Activated CD4-positive, alpha-beta T cell treated with anti-CD3 and anti-CD28 coated beads for 36 hours (primary cell): ENCODE measurements at regions of chrX and their contacts with region 1.

Region 1: GRCh38 chrX:1391707-1392375 is at the start of gene SLC25A6:
- DNase-seq: peak; percentile 100
- ATAC-seq: peak; percentile 98
- H3K4me3 Mint-ChIP-seq: peak within 1 kb of the TSS; percentile 82
- H3K27ac Mint-ChIP-seq: peak within 1 kb of the TSS; percentile 92
- H3K4me1 Mint-ChIP-seq: peaks cover 58% of the 10 kb centered on the region
- H3K27me3 Mint-ChIP-seq: no peaks in the 10 kb centered on the region
- total RNA-seq, gene SLC25A6: 396 to 456 TPM

Region 2: DNA sequence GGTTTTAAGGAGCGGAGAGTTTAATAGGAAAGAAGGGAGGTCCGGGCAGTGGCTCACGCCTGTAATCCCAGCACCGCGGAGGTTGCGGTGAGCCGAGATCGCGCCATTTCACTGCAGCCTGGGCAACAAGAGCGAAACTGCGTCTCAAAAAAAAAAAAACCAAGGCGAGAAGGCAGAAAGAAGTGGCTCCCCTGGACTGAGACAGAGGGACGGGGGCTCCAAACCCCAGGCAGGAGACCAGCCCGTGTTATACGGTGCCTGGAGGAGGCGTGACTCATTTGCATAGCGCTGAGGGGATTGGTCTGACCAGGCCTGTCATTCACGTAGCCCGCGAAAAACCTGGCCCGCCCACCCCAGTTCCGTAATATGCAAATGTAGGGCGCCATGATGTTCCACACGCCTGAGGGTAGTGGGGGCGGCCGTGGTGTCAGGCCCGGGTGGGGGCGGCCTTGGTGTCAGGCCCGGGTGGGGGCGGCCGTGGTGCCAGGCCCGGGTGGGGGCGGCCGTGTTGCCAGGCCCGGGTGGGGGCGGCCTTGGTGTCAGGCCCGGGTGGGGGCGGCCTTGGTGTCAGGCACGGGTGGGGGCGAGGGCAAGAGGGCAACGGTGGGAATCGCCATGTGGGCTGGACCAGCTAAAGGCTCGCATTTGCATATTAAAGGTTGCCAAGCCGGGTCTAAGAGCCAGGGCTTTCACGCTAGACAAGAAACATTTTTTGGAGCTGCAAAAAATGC is 1108.6 kb before region 1 on chrX:
- CTCF ChIA-PET with region 1: no interaction called
- POLR2A ChIA-PET with region 1: no interaction called
- intact Hi-C with region 1: loop called in 1 of 2 experiments (anchors 5 kb)
- DNase-seq: peak; percentile 96
- ATAC-seq: peak; percentile 96
- H3K4me3 Mint-ChIP-seq: peak overlapping the region; percentile 94
- H3K27ac Mint-ChIP-seq: peak overlapping the region; percentile 97
- H3K4me1 Mint-ChIP-seq: peaks cover 26% of the 10 kb centered on the region
- H3K27me3 Mint-ChIP-seq: no peaks in the 10 kb centered on the region

Region 3: GRCh38 chrX:386768-387575 is 1004.9 kb before region 1 on chrX and contains the start of gene PPP2R3B:
- CTCF ChIA-PET with region 1: no interaction called
- POLR2A ChIA-PET with region 1: no interaction called
- intact Hi-C with region 1: loop called in 1 of 2 experiments (anchors 1 kb)
- DNase-seq: peak; percentile 99
- ATAC-seq: peak; percentile 99
- H3K4me3 Mint-ChIP-seq: peak within 1 kb of the TSS; percentile 88
- H3K27ac Mint-ChIP-seq: peak within 1 kb of the TSS; percentile 96
- H3K4me1 Mint-ChIP-seq: peaks cover 8% of the 10 kb centered on the region
- H3K27me3 Mint-ChIP-seq: no peaks in the 10 kb centered on the region
- total RNA-seq, gene PPP2R3B: 23.3 to 26.8 TPM

Region 4: GRCh38 chrX:1246816-1247215 is 145.0 kb before region 1 on chrX:
- CTCF ChIA-PET with region 1: no interaction called
- POLR2A ChIA-PET with region 1: no interaction called
- intact Hi-C with region 1: loop called (anchors 1 to 5 kb)
- DNase-seq: peak; percentile 91
- ATAC-seq: peak; percentile 33
- H3K4me3 Mint-ChIP-seq: no peak overlapping the region
- H3K27ac Mint-ChIP-seq: no peak overlapping the region
- H3K4me1 Mint-ChIP-seq: peaks cover 36% of the 10 kb centered on the region
- H3K27me3 Mint-ChIP-seq: no peaks in the 10 kb centered on the region

Region 5: DNA sequence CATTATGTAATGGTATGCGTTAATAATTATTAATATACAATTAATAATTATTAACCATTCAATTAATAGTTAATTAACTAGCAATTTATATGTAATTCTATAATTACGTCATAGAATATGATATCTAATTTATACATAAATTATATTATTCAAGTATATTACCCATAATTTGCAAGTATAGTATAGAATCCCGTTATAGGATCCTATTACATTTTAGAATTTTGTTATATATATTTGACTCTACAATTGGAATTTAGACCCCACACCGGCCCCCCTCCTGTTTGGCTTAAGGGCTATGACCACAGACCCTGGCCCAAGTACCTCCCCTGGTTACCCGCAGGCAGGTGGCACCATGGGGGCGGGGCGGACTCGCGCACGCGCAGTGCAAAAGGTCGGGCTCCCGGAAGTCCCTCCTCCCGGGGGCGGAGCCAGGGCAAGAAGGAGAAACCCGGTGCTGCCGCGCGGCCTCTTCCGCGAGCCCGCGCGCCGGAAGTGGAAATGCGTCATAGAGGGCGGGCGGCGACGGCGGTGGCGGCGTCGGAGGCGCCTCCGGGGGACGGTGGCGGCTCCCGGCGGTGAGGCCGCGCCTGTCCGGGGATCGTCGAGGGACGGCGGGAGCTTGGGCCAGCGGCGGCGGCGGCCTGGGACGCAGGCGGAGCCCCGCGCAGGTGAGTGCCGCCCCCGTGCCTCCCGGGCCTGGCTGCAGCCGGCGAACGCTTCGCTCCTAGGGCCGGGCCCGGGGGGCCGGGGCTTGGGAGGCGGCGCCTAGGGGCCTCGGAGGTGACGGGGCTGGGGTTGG is 199.5 kb after region 1 on chrX and contains the start of gene AKAP17A:
- CTCF ChIA-PET with region 1: no interaction called
- POLR2A ChIA-PET with region 1: no interaction called
- intact Hi-C with region 1: loop called in 1 of 2 experiments (anchors 1 kb)
- DNase-seq: peak; percentile 99
- ATAC-seq: peak; percentile 91
- H3K4me3 Mint-ChIP-seq: peak within 1 kb of the TSS; percentile 91
- H3K27ac Mint-ChIP-seq: peak within 1 kb of the TSS; percentile 89
- H3K4me1 Mint-ChIP-seq: peaks cover 27% of the 10 kb centered on the region
- H3K27me3 Mint-ChIP-seq: no peaks in the 10 kb centered on the region
- total RNA-seq, gene AKAP17A: 49.7 to 51.2 TPM

Region 6: DNA sequence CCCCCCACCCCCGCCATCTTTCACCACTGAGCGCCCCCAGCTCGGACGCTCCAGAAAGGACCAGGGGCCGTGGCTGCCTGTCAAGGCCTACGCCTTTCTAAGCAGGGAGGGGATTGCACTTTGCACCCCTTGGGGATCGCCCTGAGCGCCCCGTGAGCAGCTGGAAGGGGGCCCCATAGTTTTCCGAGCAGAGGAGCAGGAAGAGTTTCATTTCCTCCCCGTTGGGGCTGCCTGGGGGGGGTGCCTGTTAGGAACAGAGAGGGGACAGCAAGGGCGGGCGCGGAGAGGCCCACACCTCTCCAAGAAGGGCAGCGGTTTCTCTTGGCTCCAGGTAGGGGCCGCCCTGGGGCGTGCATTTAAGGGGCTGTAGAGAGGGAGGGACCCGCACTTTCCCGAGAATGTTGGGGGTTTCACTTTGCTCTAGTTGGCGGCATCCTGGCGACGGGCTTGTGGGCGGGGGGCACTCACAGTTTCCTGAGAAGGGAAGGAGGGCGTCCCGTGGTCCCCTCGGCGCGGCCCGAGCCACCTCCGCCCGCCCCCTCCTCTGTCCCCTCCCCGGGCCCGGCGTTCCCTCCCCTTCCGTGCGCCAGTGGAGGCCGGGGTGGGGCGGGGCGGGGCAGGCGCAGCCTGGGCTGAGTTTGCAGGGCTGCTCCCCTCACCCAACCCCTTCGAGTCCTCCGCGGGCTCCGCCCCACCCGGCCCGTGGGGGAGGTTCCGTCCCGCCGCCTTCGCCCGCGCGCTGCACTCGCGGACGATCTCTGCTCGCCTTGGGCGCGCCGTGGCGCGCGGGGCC is 1217.0 kb after region 1 on chrX:
- CTCF ChIA-PET with region 1: no interaction called
- POLR2A ChIA-PET with region 1: no interaction called
- intact Hi-C with region 1: loop called in 1 of 2 experiments (anchors 1 kb)
- DNase-seq: peak; percentile 93
- ATAC-seq: peak; percentile 94
- H3K4me3 Mint-ChIP-seq: peak overlapping the region; percentile 83
- H3K27ac Mint-ChIP-seq: peak overlapping the region; percentile 82
- H3K4me1 Mint-ChIP-seq: peaks cover 47% of the 10 kb centered on the region
- H3K27me3 Mint-ChIP-seq: no peaks in the 10 kb centered on the region